CD4-positive, alpha-beta memory T cell (primary cell): ENCODE measurements at regions of chr1 and their contacts with region 1.

Region 1: DNA sequence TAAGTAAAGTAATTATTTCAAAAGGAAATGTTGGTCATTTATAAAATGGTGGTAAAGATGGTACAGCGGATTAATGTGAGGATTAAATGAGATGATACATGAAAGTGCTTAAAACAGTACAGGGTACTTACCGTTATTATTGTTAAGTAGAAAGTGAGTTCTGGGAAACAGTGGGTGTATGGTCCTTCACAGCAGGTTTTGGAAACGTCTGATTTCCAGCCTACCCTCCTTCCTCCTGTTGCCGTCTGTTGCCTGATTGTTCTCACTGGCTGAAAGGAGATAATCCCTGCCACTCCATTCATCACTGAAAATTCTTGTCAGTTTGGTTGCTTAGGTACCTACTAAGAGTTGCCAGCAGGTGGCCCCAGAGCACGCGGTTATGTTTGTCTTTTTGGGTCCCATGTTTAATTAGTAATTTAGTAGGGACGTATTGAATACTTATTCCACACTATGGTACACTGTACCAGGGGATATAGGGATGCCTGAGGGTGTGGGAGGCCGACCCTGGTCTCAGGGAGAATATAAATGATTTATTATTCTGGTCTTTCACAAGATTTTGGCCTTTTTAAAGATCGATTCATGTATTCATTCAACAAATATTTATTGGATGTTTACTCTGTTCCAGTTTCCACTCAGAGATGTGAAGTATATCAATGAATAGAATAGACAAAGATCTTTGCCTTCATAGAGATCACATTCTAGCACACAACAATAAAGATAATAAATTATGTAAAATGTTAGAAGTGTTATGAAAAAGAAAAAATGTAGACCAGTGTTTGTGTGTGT is 30.8 kb upstream of the RPTN start:
- DNase-seq: peak; percentile 67 to 73 (median 68)
- H3K4me3 ChIP-seq: no peak overlapping the region
- H3K4me3 Mint-ChIP-seq: peak overlapping the region; percentile 65 to 88 (median 80)
- H3K27ac ChIP-seq: no peak overlapping the region
- H3K27ac Mint-ChIP-seq: peak overlapping the region in 4 of 7 donors; percentile 43 to 67 (median 46)
- H3K4me1 ChIP-seq: no peaks in the 10 kb centered on the region
- H3K4me1 Mint-ChIP-seq: peaks cover 6 to 7% (median 6%) of the 10 kb centered on the region in 4 donors
- H3K27me3 ChIP-seq: no peaks in the 10 kb centered on the region
- H3K27me3 Mint-ChIP-seq: peaks cover 2 to 6% of the 10 kb centered on the region in 2 donors

Region 2: GRCh38 chr1:151934048-151934493 is 255.8 kb before region 1 on chr1:
- CTCF ChIA-PET with region 1: no interaction called
- POLR2A ChIA-PET with region 1: no interaction called
- intact Hi-C with region 1: loop called (anchors 1 kb)
- DNase-seq: peak; percentile 52 to 75 (median 69)
- H3K4me3 ChIP-seq: no peak overlapping the region
- H3K4me3 Mint-ChIP-seq: peak overlapping the region in 1 of 8 donors; percentile 4
- H3K27ac ChIP-seq: no peak overlapping the region
- H3K27ac Mint-ChIP-seq: peak overlapping the region in 5 of 7 donors; percentile 31 to 91 (median 65)
- H3K4me1 ChIP-seq: no peaks in the 10 kb centered on the region
- H3K4me1 Mint-ChIP-seq: peaks cover 4 to 6% (median 4%) of the 10 kb centered on the region in 4 donors
- H3K27me3 ChIP-seq: no peaks in the 10 kb centered on the region
- H3K27me3 Mint-ChIP-seq: peaks cover 0 to 4% of the 10 kb centered on the region in 2 donors

Region 3: GRCh38 chr1:152047730-152048402 is 142.0 kb before region 1 on chr1:
- CTCF ChIA-PET with region 1: interaction called, 354 read pairs
- POLR2A ChIA-PET with region 1: interaction called, 9 read pairs
- intact Hi-C with region 1: loop called (anchors 1 kb)
- DNase-seq: peak; percentile 81 to 96 (median 83)
- H3K4me3 ChIP-seq: peak overlapping the region; percentile 12 to 27
- H3K4me3 Mint-ChIP-seq: peak overlapping the region; percentile 58 to 91 (median 82)
- H3K27ac ChIP-seq: peak overlapping the region; percentile 83
- H3K27ac Mint-ChIP-seq: peak overlapping the region; percentile 95 to 99 (median 99)
- H3K4me1 ChIP-seq: peaks cover 31% of the 10 kb centered on the region
- H3K4me1 Mint-ChIP-seq: peaks cover 19 to 44% (median 33%) of the 10 kb centered on the region in 4 donors
- H3K27me3 ChIP-seq: no peaks in the 10 kb centered on the region
- H3K27me3 Mint-ChIP-seq: peaks cover 0 to 2% of the 10 kb centered on the region in 2 donors

Region 4: GRCh38 chr1:152078831-152079441 is 110.9 kb before region 1 on chr1:
- CTCF ChIA-PET with region 1: no interaction called
- POLR2A ChIA-PET with region 1: no interaction called
- intact Hi-C with region 1: no loop called
- DNase-seq: no peak
- H3K4me3 ChIP-seq: no peak overlapping the region
- H3K4me3 Mint-ChIP-seq: no peak overlapping the region
- H3K27ac ChIP-seq: no peak overlapping the region
- H3K27ac Mint-ChIP-seq: no peak overlapping the region
- H3K4me1 ChIP-seq: no peaks in the 10 kb centered on the region
- H3K4me1 Mint-ChIP-seq: no peaks in the 10 kb centered on the region
- H3K27me3 ChIP-seq: no peaks in the 10 kb centered on the region
- H3K27me3 Mint-ChIP-seq: peaks cover 6 to 24% of the 10 kb centered on the region in 2 donors

Region 5: GRCh38 chr1:152347116-152347728 is 157.4 kb after region 1 on chr1:
- CTCF ChIA-PET with region 1: interaction called, 6 read pairs
- POLR2A ChIA-PET with region 1: no interaction called
- intact Hi-C with region 1: loop called (anchors 1 kb)
- DNase-seq: peak; percentile 55 to 67 (median 60)
- H3K4me3 ChIP-seq: no peak overlapping the region
- H3K4me3 Mint-ChIP-seq: no peak overlapping the region
- H3K27ac ChIP-seq: no peak overlapping the region
- H3K27ac Mint-ChIP-seq: no peak overlapping the region
- H3K4me1 ChIP-seq: no peaks in the 10 kb centered on the region
- H3K4me1 Mint-ChIP-seq: peaks cover 0 to 2% (median under 1%) of the 10 kb centered on the region in 4 donors
- H3K27me3 ChIP-seq: no peaks in the 10 kb centered on the region
- H3K27me3 Mint-ChIP-seq: peaks cover 7 to 9% of the 10 kb centered on the region in 2 donors

Region 6: GRCh38 chr1:152398812-152399698 is 209.2 kb after region 1 on chr1:
- CTCF ChIA-PET with region 1: interaction called, 12 read pairs
- POLR2A ChIA-PET with region 1: interaction called, 3 read pairs
- intact Hi-C with region 1: loop called (anchors 5 kb)
- DNase-seq: peak in 4 of 5 donors; percentile 13 to 30 (median 16)
- H3K4me3 ChIP-seq: no peak overlapping the region
- H3K4me3 Mint-ChIP-seq: peak overlapping the region in 1 of 8 donors; percentile 43
- H3K27ac ChIP-seq: no peak overlapping the region
- H3K27ac Mint-ChIP-seq: peak overlapping the region in 3 of 7 donors; percentile 1 to 69 (median 5)
- H3K4me1 ChIP-seq: peaks cover 16% of the 10 kb centered on the region
- H3K4me1 Mint-ChIP-seq: peaks cover 14 to 24% (median 22%) of the 10 kb centered on the region in 4 donors
- H3K27me3 ChIP-seq: no peaks in the 10 kb centered on the region
- H3K27me3 Mint-ChIP-seq: peaks cover 3 to 6% of the 10 kb centered on the region in 2 donors

Region 7: DNA sequence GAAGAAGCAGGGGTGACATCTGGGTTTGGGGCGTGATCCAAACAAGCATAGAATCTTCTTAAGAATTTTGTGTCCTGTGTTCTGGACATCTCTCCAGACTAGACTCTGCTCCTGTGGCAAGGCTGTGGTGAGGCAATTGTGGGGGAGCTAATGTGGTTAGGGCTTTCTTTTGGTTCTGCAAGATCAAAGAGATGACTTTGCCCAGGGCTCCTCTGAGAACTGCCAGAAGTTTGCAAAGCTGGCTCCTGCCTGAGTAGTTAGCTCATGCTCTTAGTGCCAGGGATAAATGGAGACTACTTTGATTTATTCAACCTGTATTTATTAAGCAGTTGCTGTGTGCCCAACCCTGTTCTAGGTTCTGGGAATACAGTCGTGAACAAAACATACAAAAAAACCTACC is 258.2 kb after region 1 on chr1:
- CTCF ChIA-PET with region 1: interaction called, 84 read pairs
- POLR2A ChIA-PET with region 1: no interaction called
- intact Hi-C with region 1: no loop called
- DNase-seq: no peak
- H3K4me3 ChIP-seq: no peak overlapping the region
- H3K4me3 Mint-ChIP-seq: no peak overlapping the region
- H3K27ac ChIP-seq: no peak overlapping the region
- H3K27ac Mint-ChIP-seq: no peak overlapping the region
- H3K4me1 ChIP-seq: peaks cover 7% of the 10 kb centered on the region
- H3K4me1 Mint-ChIP-seq: no peaks in the 10 kb centered on the region
- H3K27me3 ChIP-seq: no peaks in the 10 kb centered on the region
- H3K27me3 Mint-ChIP-seq: peaks cover 0 to 2% of the 10 kb centered on the region in 2 donors